Activated CD4-positive, alpha-beta memory T cell treated with anti-CD3 and anti-CD28 coated beads, Interleukin-2, amount 10 ng/mL, durations not matched to agents 7 days and 5 days (primary cell): ENCODE measurements at regions of chr2 and their contacts with region 1.

Region 1: GRCh38 chr2:53970724-53971602 is at the start of gene PSME4:
- DNase-seq: peak; percentile 95
- H3K4me3 Mint-ChIP-seq: peak within 1 kb of the TSS; percentile 83
- H3K27ac Mint-ChIP-seq: peak within 1 kb of the TSS; percentile 87
- H3K4me1 Mint-ChIP-seq: peaks cover 41% of the 10 kb centered on the region
- H3K27me3 Mint-ChIP-seq: no peaks in the 10 kb centered on the region
- total RNA-seq, gene PSME4: 47.4 to 47.8 TPM

Region 2: GRCh38 chr2:53767405-53768241 is 203.3 kb before region 1 on chr2 and contains the start of gene CHAC2:
- CTCF ChIA-PET with region 1: no interaction called
- POLR2A ChIA-PET with region 1: interaction called, 27 read pairs
- DNase-seq: peak; percentile 87
- H3K4me3 Mint-ChIP-seq: peak within 1 kb of the TSS; percentile 95
- H3K27ac Mint-ChIP-seq: peak within 1 kb of the TSS; percentile 86
- H3K4me1 Mint-ChIP-seq: peaks cover 44% of the 10 kb centered on the region
- H3K27me3 Mint-ChIP-seq: no peaks in the 10 kb centered on the region
- total RNA-seq, gene CHAC2: 9.1 to 10.3 TPM

Region 3: DNA sequence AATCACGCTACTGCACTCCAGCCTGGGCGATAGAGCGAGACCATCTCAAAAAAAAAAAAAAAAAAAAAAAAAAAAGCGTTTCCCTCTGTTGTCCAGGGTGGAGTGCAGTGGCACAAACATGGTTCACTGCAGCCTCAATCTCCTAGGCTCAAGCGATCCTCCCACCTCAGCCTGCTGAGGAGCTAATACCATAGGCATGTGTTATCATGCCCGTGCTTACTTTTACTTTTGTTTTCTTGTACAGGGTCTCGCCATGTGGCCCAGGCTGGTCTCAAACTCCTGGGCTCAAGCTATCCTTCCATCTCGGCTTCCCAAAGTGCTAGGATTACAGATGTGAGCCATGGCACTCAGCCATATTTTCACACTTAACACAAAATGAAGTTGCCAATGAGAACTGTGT is 37.6 kb before region 1 on chr2:
- CTCF ChIA-PET with region 1: no interaction called
- POLR2A ChIA-PET with region 1: no interaction called
- DNase-seq: no peak
- H3K4me3 Mint-ChIP-seq: no peak overlapping the region
- H3K27ac Mint-ChIP-seq: no peak overlapping the region
- H3K4me1 Mint-ChIP-seq: no peaks in the 10 kb centered on the region
- H3K27me3 Mint-ChIP-seq: no peaks in the 10 kb centered on the region

Region 4: GRCh38 chr2:53945538-53945937 is 25.4 kb before region 1 on chr2:
- CTCF ChIA-PET with region 1: no interaction called
- POLR2A ChIA-PET with region 1: interaction called, 12 read pairs
- DNase-seq: no peak
- H3K4me3 Mint-ChIP-seq: no peak overlapping the region
- H3K27ac Mint-ChIP-seq: no peak overlapping the region
- H3K4me1 Mint-ChIP-seq: peaks cover 15% of the 10 kb centered on the region
- H3K27me3 Mint-ChIP-seq: no peaks in the 10 kb centered on the region

Region 5: GRCh38 chr2:53994818-53995808 is 24.1 kb after region 1 on chr2:
- CTCF ChIA-PET with region 1: interaction called, 9 read pairs
- POLR2A ChIA-PET with region 1: interaction called, 57 read pairs
- DNase-seq: no peak
- H3K4me3 Mint-ChIP-seq: peak overlapping the region; percentile 43
- H3K27ac Mint-ChIP-seq: peak overlapping the region; percentile 91
- H3K4me1 Mint-ChIP-seq: peaks cover 28% of the 10 kb centered on the region
- H3K27me3 Mint-ChIP-seq: no peaks in the 10 kb centered on the region

Region 6: GRCh38 chr2:54012538-54013141 is 41.7 kb after region 1 on chr2:
- CTCF ChIA-PET with region 1: no interaction called
- POLR2A ChIA-PET with region 1: interaction called, 13 read pairs
- DNase-seq: no peak
- H3K4me3 Mint-ChIP-seq: no peak overlapping the region
- H3K27ac Mint-ChIP-seq: no peak overlapping the region
- H3K4me1 Mint-ChIP-seq: peaks cover 33% of the 10 kb centered on the region
- H3K27me3 Mint-ChIP-seq: no peaks in the 10 kb centered on the region

Region 7: GRCh38 chr2:54052825-54053718 is 82.1 kb after region 1 on chr2:
- CTCF ChIA-PET with region 1: interaction called, 6 read pairs
- POLR2A ChIA-PET with region 1: interaction called, 14 read pairs
- DNase-seq: no peak
- H3K4me3 Mint-ChIP-seq: no peak overlapping the region
- H3K27ac Mint-ChIP-seq: peak overlapping the region; percentile 77
- H3K4me1 Mint-ChIP-seq: peaks cover 37% of the 10 kb centered on the region
- H3K27me3 Mint-ChIP-seq: no peaks in the 10 kb centered on the region

Region 8: DNA sequence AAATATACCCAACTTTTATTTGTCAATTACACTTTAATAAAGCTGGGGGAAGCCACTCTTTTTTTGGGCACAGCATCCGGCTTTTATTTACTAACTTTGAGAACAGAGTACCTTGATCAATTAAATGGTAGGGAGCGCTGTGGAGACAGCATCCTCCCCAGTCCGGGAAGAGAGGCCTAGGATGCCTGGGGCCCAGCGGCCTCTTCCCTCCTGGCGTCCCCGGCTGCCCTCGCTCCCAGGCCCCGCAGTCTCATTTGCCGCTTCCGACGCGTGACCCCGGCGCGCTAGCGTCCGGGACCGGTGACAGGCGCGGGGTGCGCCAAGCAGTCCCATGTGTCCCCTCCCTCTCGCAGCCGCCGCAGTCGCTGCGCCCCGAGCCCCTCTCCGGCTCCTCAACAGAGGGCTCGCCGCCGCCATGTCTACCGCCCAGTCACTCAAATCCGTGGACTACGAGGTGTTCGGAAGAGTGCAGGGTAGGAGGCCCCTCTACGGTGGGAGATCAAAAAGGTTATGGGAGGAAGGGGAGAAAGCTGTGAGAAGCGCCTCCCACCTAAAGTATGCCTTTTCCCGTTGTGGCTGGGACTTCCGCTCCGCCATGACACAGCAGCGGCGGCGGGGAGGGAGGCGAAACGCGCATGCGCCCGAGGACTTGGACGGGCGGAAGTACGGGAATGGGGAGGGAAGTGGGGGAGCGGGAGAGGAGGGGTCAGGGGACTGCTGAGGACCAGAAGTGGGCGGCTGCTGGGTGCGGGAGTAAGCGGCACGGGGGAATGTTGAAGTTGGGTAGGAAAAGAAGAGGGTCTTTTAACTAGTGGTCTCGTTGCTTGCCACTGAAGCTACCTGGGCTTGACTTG is 144.5 kb after region 1 on chr2 and contains the start of gene ACYP2:
- CTCF ChIA-PET with region 1: no interaction called
- POLR2A ChIA-PET with region 1: interaction called, 21 read pairs
- DNase-seq: peak; percentile 91
- H3K4me3 Mint-ChIP-seq: peak within 1 kb of the TSS; percentile 92
- H3K27ac Mint-ChIP-seq: peak within 1 kb of the TSS; percentile 97
- H3K4me1 Mint-ChIP-seq: peaks cover 24% of the 10 kb centered on the region
- H3K27me3 Mint-ChIP-seq: no peaks in the 10 kb centered on the region
- total RNA-seq, gene ACYP2: 8.6 to 10.0 TPM